Transverse colon (tissue), 4 donors: ENCODE measurements at regions of chr12 and their contacts with region 1.

Region 1: DNA sequence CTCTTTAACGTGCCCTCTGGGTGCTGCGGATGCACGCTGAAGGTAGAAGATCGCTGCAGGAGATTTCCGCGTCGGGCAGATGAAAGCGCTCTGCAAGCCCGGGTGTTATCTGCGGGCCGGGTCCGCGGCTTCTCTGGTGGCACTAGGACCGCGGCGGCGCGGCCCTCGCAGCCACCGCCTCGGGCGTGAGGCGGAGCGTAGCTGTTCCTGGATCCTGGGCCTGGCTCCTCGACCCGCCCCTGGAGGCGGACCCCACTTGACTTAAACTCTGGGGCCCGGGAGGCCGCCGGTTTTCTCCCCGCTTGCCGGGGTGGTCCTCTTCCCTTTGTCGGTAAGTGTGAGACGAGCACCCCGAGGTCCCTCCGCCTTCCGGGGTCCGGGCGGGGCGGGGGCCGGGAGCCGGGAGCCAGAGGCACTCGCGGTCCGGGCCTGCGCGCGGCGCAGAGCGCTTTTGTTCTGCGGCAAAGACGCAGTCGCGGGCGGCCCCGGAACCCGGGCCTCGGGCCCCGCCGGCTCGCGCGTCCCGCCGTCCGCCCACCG is at the start of gene RESF1:
- DNase-seq: peak; percentile 93
- H3K4me3 ChIP-seq: peak within 1 kb of the TSS; percentile 70 to 90 (median 78)
- H3K27ac ChIP-seq: peak within 1 kb of the TSS; percentile 94 to 98 (median 96)
- H3K4me1 ChIP-seq: peaks cover 10 to 30% (median 20%) of the 10 kb centered on the region in 4 donors
- H3K27me3 ChIP-seq: no peaks in the 10 kb centered on the region
- CTCF ChIP-seq: no peak
- EP300 ChIP-seq: no peak
- POLR2A ChIP-seq: peak; percentile 86
- total RNA-seq, gene RESF1: 23.3 to 81.8 (median 35.1) TPM

Region 2: DNA sequence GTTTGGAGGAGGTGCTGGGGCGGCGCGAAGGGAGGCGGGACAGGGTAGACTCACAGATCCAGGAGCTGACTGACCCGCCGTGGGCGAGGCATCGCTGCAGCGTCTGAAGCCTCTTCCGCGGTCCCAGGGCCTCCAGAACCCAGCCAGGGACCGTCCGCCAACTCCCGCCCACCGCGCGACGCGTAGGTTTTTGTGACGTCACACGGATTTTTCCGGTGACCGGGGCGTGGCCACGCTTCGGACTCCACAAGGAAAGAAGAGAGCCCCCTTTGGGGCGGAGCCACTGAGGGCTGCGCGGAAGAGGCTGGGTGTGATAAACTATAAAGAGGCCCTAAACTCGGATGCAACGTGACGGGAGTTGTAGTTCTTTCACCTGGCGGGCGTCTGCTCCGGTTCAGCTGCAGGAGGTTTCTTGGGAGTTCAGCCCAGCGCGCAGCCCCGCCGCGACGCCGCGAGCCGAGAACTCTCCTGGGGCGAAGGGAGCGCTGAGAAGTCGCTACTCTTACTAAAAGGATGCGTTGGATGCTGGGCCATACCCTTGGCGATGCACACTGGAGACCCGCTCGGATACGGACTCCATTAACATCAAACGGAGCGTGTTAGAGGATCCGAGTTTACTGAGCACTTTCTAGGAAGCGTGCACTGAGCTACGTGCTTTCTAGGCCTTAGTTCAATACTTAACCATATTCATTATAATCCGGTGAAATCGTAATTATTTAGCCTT is 230.2 kb before region 1 on chr12 and contains the start of gene AMN1:
- in situ Hi-C with region 1: no loop called
- intact Hi-C with region 1: loop called (anchors 10 kb)
- DNase-seq: peak; percentile 100
- H3K4me3 ChIP-seq: peak within 1 kb of the TSS; percentile 63 to 79 (median 70)
- H3K27ac ChIP-seq: peak within 1 kb of the TSS; percentile 96 to 98 (median 97)
- H3K4me1 ChIP-seq: peaks cover 9 to 33% (median 14%) of the 10 kb centered on the region in 4 donors
- H3K27me3 ChIP-seq: no peaks in the 10 kb centered on the region
- CTCF ChIP-seq: peak in 3 of 5 experiments; percentile 10 to 56 (median 49)
- EP300 ChIP-seq: no peak
- POLR2A ChIP-seq: peak; percentile 81
- total RNA-seq, gene AMN1: 5.7 to 10.5 (median 8.7) TPM in 3 of 4 donors, not detected in the other